Naive thymus-derived CD4-positive, alpha-beta T cell (primary cell): ENCODE measurements at regions of chr1 and their contacts with region 1.

Region 1: GRCh38 chr1:205211169-205211838 is at the start of gene DSTYK:
- DNase-seq: peak; percentile 77 to 95 (median 93)
- ATAC-seq: peak; percentile 95
- H3K4me3 ChIP-seq: peak within 1 kb of the TSS; percentile 75
- H3K4me3 Mint-ChIP-seq: peak within 1 kb of the TSS; percentile 89 to 98 (median 96)
- H3K27ac ChIP-seq: peak within 1 kb of the TSS; percentile 87
- H3K27ac Mint-ChIP-seq: peak within 1 kb of the TSS; percentile 95 to 99 (median 98)
- H3K4me1 ChIP-seq: peaks cover 8% of the 10 kb centered on the region in 2 donors
- H3K4me1 Mint-ChIP-seq: peaks cover 12 to 66% (median 54%) of the 10 kb centered on the region in 7 donors
- H3K27me3 ChIP-seq: no peaks in the 10 kb centered on the region
- H3K27me3 Mint-ChIP-seq: peaks cover 0 to 4% (median 0%) of the 10 kb centered on the region in 5 donors
- total RNA-seq, gene DSTYK: 11.3 to 18.5 (median 15.2) TPM

Region 2: DNA sequence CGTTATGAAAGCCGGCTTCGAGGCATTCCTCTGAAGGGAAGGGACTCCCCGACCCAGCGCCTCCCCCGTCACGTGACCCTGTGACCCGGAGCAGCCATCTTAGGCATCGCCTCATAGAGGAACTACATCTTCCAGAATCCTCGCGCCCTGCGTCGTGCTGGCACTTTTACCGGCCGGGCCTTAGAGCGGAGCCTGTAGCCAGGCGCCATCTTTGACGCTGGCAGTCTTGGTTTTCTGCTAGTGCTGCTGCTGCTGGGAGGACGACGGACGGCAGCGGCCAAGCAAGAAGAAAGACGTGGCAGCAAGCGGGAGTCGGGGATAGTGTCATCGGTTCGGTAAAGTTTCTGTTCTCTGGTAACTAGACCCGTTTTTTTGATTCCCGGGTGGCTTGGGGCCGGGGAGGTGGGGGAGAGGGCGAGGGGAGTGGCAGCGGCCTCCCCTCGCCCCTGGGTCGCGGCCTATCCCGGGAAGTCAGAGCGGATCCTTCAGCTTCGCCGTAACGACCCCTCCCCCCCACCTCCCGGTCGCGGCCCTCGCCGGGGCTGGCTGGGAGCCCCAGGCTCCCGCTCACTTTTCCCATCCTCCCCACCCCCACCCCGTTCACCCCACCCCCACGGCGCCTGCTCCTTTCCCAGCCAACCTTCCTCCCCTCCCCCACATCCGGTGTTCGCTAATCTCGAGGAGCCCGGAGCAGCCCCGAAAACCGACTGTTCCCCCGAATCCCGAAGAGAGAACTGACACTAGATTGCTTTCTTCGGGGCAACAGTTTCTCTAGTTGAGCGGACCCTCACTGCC is 1415.7 kb before region 1 on chr1 and contains the starts of genes ZBED6 and ZC3H11A:
- CTCF ChIA-PET with region 1: no interaction called
- POLR2A ChIA-PET with region 1: no interaction called
- intact Hi-C with region 1: loop called in 1 of 2 experiments (anchors 5 kb)
- DNase-seq: peak; percentile 85 to 100 (median 97)
- ATAC-seq: peak; percentile 99
- H3K4me3 ChIP-seq: peak within 1 kb of the TSS; percentile 80
- H3K4me3 Mint-ChIP-seq: peak within 1 kb of the TSS; percentile 94 to 98 (median 96)
- H3K27ac ChIP-seq: peak within 1 kb of the TSS; percentile 80
- H3K27ac Mint-ChIP-seq: peak within 1 kb of the TSS; percentile 82 to 98 (median 96)
- H3K4me1 ChIP-seq: peaks cover 35 to 36% of the 10 kb centered on the region in 2 donors
- H3K4me1 Mint-ChIP-seq: peaks cover 18 to 55% (median 48%) of the 10 kb centered on the region in 7 donors
- H3K27me3 ChIP-seq: no peaks in the 10 kb centered on the region
- H3K27me3 Mint-ChIP-seq: no peaks in the 10 kb centered on the region
- total RNA-seq, gene ZBED6: 23.8 to 36.1 (median 31.9) TPM
- total RNA-seq, gene ZC3H11A: 70.9 to 138 (median 91.6) TPM

Region 3: GRCh38 chr1:205172729-205173366 is 38.5 kb before region 1 on chr1:
- CTCF ChIA-PET with region 1: no interaction called
- POLR2A ChIA-PET with region 1: no interaction called
- intact Hi-C with region 1: loop called (anchors 5 kb)
- DNase-seq: no peak
- ATAC-seq: no peak
- H3K4me3 ChIP-seq: no peak overlapping the region
- H3K4me3 Mint-ChIP-seq: peak overlapping the region in 1 of 10 donors; percentile 28
- H3K27ac ChIP-seq: no peak overlapping the region
- H3K27ac Mint-ChIP-seq: peak overlapping the region in 2 of 9 donors; percentile 4 to 21
- H3K4me1 ChIP-seq: peaks cover 3 to 4% of the 10 kb centered on the region in 2 donors
- H3K4me1 Mint-ChIP-seq: peaks cover 12 to 42% (median 31%) of the 10 kb centered on the region in 7 donors
- H3K27me3 ChIP-seq: no peaks in the 10 kb centered on the region
- H3K27me3 Mint-ChIP-seq: no peaks in the 10 kb centered on the region

Region 4: DNA sequence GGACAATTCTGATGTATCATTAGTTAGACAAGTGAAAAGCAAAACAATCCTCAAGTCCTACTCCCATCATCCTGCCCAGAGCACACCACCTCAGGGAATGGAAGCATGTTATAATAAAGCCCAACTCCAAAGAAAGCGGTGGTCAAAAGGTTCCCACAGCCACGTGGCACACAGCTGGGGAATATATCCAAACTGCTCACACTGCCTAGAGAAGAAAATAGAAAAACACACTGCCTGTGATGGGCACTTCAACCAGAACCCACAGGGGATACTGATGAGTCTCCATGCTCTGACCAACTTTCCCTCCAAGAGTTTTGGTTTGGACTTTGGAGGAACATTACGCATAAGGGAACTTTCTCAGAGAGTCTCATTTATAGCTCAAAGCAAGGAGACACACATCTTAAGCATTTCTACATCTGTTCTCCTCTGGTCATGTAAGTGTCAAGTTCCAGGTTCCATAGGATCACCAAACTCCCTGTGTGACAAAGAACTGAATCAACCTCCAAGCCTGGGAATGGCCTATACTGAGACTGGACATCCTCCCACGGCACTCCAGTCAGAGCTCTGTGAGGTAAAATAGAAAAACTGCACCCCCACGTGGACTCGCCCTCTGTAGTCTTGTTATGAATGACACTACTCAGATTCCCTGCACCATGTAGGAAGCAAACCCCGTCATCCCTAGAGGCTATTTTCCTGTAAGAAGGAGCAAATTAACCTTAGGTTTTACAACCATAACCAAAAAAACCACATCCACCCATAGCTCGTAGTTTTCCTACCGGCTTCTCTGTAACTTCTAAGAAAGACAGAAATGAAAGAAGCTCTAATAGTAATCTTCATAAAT is 12.0 kb before region 1 on chr1:
- CTCF ChIA-PET with region 1: no interaction called
- POLR2A ChIA-PET with region 1: no interaction called
- intact Hi-C with region 1: loop called in 1 of 2 experiments (anchors 1 kb)
- DNase-seq: peak in 4 of 9 donors; percentile 12 to 53 (median 16)
- ATAC-seq: peak; percentile 48
- H3K4me3 ChIP-seq: no peak overlapping the region
- H3K4me3 Mint-ChIP-seq: peak overlapping the region; percentile 38 to 72 (median 59)
- H3K27ac ChIP-seq: no peak overlapping the region
- H3K27ac Mint-ChIP-seq: peak overlapping the region in 8 of 9 donors; percentile 6 to 84 (median 39)
- H3K4me1 ChIP-seq: peaks cover 8 to 16% of the 10 kb centered on the region in 2 donors
- H3K4me1 Mint-ChIP-seq: peaks cover 37 to 67% (median 56%) of the 10 kb centered on the region in 7 donors
- H3K27me3 ChIP-seq: no peaks in the 10 kb centered on the region
- H3K27me3 Mint-ChIP-seq: no peaks in the 10 kb centered on the region

Region 5: DNA sequence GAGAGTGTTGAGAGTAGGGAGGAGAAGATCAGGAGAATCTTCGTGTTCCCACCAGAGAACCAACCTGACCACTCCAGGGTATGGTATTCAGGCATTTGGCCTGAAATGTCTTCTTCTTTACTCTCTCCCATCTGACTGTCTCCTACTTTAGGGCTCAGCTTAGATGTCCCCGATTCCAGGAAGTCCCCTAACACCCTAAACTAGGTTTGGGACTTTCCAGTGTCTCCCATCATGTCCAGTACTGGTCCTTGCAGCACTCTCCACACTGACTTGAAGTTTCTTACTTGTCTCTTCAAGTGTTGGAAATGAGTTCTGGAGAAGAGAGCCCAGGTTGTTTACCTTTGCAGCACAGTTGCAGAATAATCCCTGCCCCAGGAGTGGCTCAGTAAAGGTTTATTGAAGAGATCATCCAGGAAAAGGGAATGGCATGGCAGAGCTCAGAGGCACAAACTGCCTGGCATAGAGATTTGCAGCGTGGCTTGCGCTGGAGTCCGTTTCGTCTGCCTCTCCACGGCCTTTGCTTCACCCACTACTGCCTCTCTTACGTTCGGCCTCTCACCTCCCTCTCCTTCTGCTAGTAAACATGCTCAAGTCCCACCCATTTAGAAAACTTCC is 426.7 kb after region 1 on chr1:
- CTCF ChIA-PET with region 1: no interaction called
- POLR2A ChIA-PET with region 1: no interaction called
- intact Hi-C with region 1: no loop called
- DNase-seq: no peak
- ATAC-seq: no peak
- H3K4me3 ChIP-seq: no peak overlapping the region
- H3K4me3 Mint-ChIP-seq: peak overlapping the region in 1 of 10 donors; percentile 25
- H3K27ac ChIP-seq: no peak overlapping the region
- H3K27ac Mint-ChIP-seq: peak overlapping the region in 1 of 9 donors; percentile 70
- H3K4me1 ChIP-seq: no peaks in the 10 kb centered on the region
- H3K4me1 Mint-ChIP-seq: peaks cover 0 to 11% (median 3%) of the 10 kb centered on the region in 7 donors
- H3K27me3 ChIP-seq: no peaks in the 10 kb centered on the region
- H3K27me3 Mint-ChIP-seq: peaks cover 0 to 42% (median 0%) of the 10 kb centered on the region in 5 donors

Region 6: GRCh38 chr1:205750138-205751035 is 539.1 kb after region 1 on chr1 and contains the start of gene NUCKS1:
- CTCF ChIA-PET with region 1: no interaction called
- POLR2A ChIA-PET with region 1: no interaction called
- intact Hi-C with region 1: loop called (anchors 1 to 2 kb)
- DNase-seq: peak; percentile 79 to 99 (median 97)
- ATAC-seq: peak; percentile 86
- H3K4me3 ChIP-seq: peak within 1 kb of the TSS; percentile 81
- H3K4me3 Mint-ChIP-seq: peak within 1 kb of the TSS; percentile 83 to 99 (median 96)
- H3K27ac ChIP-seq: peak within 1 kb of the TSS; percentile 95
- H3K27ac Mint-ChIP-seq: peak within 1 kb of the TSS; percentile 96 to 100 (median 98)
- H3K4me1 ChIP-seq: peaks cover 6 to 10% of the 10 kb centered on the region in 2 donors
- H3K4me1 Mint-ChIP-seq: peaks cover 24 to 49% (median 39%) of the 10 kb centered on the region in 7 donors
- H3K27me3 ChIP-seq: no peaks in the 10 kb centered on the region
- H3K27me3 Mint-ChIP-seq: peaks cover 0 to 3% (median 0%) of the 10 kb centered on the region in 5 donors
- total RNA-seq, gene NUCKS1: 70.4 to 164 (median 122) TPM